PC-9 (cell line): ENCODE measurements at regions of chr2 and their contacts with region 1.

Region 1: DNA sequence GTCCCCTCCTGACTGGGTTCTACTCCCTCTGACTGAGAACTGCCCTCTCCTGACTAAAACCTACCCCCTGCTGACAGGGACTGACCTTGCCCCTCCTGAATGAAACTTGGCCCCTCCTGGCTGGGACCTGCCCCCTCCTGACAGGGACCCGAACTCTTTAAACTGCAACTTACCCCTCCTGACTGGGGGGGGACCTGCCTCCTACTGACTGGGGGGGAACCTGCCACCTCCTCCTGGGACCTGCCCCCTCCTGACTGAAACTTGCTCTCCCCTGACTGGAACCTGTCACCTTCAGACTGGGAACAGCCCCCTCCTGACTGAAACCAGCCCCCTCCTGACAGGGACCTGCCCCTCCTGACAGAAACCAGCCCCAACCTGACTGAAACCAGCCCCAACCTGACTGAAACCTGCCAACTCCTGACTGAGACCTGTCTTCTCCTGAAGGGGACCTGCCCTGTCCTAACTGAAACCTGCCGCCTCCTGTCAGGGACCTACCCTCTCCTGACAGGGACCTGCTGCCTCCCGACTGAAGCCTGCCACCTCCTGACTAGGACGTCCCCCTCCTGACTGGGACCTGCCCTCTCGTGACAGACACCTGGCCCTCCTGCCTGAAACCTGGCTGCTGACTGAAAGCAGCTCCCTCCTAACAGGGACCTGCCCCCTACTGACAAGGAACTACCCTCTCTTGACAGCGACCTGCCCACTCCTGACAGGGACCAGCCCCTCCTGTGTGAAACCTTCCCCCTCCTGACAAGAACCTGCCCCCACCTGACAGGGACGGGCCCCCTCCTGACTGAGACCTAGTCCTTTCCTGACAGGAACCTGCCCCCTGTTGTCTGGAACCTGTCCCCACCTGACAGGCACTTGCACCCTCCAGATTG is 87.1 kb downstream of the PXDN start:
- DNase-seq: no peak
- H3K4me3 ChIP-seq: no peak overlapping the region
- H3K27ac ChIP-seq: 0 out of 2 replicates have a peak overlapping the region, but pooled peaks have one; percentile 16
- H3K4me1 ChIP-seq: no peaks in the 10 kb centered on the region
- H3K27me3 ChIP-seq: peaks cover 18% of the 10 kb centered on the region
- CTCF ChIP-seq: no peak

Region 2: GRCh38 chr2:1685957-1686784 is 29.0 kb after region 1 on chr2:
- CTCF ChIA-PET with region 1: no interaction called
- POLR2A ChIA-PET with region 1: no interaction called
- intact Hi-C with region 1: no loop called
- DNase-seq: peak; percentile 67 to 74
- H3K4me3 ChIP-seq: no peak overlapping the region
- H3K27ac ChIP-seq: peak overlapping the region; percentile 70
- H3K4me1 ChIP-seq: peaks cover 50% of the 10 kb centered on the region
- H3K27me3 ChIP-seq: peaks cover 18% of the 10 kb centered on the region; the same call in 1 of the 2 replicates
- CTCF ChIP-seq: no peak

Region 3: DNA sequence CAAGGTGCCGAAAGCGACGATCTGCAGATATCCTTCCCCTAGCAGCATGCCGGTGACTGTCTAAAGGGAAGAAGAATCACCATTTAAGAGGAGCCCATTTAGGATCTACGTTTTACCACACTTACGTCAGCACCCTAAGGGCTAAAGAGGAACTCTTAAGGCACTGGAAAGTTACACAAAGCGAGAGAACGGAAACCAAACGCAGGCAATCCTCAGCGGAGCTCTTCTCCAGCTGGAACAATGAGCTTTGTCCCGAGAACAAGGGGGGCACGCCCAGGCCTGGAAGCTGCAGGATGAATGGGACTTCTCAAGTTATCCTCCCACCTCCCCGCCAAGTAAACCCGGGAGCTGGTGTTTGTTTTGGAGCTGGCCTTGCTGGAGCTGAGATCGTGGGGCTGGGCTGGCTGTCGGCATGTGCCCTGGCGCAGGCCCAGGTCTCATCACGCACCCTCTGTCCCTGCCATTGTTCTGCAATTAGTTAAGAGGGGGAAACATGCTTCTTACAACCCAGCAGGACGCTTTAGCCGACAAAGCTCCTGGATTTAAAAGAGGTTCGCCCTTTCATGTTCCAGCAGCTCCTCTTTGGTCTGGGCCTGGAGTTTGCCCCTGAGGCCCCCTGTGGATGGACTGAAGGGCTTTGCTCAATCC is 50.7 kb after region 1 on chr2:
- CTCF ChIA-PET with region 1: interaction called, 18 read pairs
- POLR2A ChIA-PET with region 1: no interaction called
- intact Hi-C with region 1: no loop called
- DNase-seq: peak in 1 of 2 experiments; percentile 44
- H3K4me3 ChIP-seq: no peak overlapping the region
- H3K27ac ChIP-seq: no peak overlapping the region
- H3K4me1 ChIP-seq: no peaks in the 10 kb centered on the region
- H3K27me3 ChIP-seq: peaks cover 21% of the 10 kb centered on the region
- CTCF ChIP-seq: no peak